ENCODE measurements at regions of chr10 and their contacts with region 1.

Region 1: GRCh38 chr10:131043039-131043691 is 268.4 kb downstream of the TCERG1L start:
- DNase-seq: no peak
- H3K4me3 ChIP-seq: no peak overlapping the region
- H3K27ac ChIP-seq: no peak overlapping the region
- H3K4me1 ChIP-seq: no peaks in the 10 kb centered on the region
- H3K27me3 ChIP-seq: peaks cover 0 to 9% of the 10 kb centered on the region in 2 donors
- CTCF ChIP-seq: no peak
- POLR2A ChIP-seq: no peak

Region 2: DNA sequence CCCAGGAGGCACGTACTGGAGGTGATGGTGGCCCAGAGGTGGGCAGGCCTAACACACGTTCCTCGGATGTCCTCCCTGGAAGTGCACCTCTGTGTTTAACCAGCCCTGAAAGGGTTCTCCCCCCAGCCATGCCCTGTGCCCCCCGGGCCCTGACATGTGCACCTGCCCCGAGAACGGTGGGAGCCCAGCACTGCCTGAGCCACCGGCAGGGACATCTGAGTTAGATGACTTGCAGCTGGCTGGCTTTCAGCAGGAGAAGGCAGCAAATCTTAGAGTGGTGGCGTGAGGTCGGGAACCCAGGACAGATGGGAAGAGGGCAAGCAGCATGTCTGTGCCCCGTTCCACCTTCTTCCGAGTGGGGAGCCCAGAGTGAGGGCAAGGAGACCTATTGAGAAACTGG is 23.5 kb before region 1 on chr10:
- intact Hi-C with region 1: loop called (anchors 1 kb)
- DNase-seq: peak in 1 of 2 donors; percentile 45
- H3K4me3 ChIP-seq: no peak overlapping the region
- H3K27ac ChIP-seq: no peak overlapping the region
- H3K4me1 ChIP-seq: no peaks in the 10 kb centered on the region
- H3K27me3 ChIP-seq: peaks cover 0 to 26% of the 10 kb centered on the region in 2 donors
- CTCF ChIP-seq: no peak
- POLR2A ChIP-seq: no peak

Measured in breast epithelium (tissue), 4 donors.